Prostate gland (tissue), 2 donors: ENCODE measurements at regions of chr14 and their contacts with region 1.

Region 1: GRCh38 chr14:88667555-88668273 is 104.9 kb downstream of the ZC3H14 start:
- DNase-seq: peak; percentile 67
- H3K4me3 ChIP-seq: no peak overlapping the region
- H3K27ac ChIP-seq: peak overlapping the region; percentile 22
- H3K4me1 ChIP-seq: no peaks in the 10 kb centered on the region
- H3K27me3 ChIP-seq: no peaks in the 10 kb centered on the region
- CTCF ChIP-seq: peak in 3 of 4 experiments; percentile 69 to 79 (median 72)
- POLR2A ChIP-seq: no peak

Region 2: GRCh38 chr14:88492272-88493089 is 175.2 kb before region 1 on chr14:
- intact Hi-C with region 1: no loop called
- DNase-seq: peak; percentile 78
- H3K4me3 ChIP-seq: no peak overlapping the region
- H3K27ac ChIP-seq: no peak overlapping the region
- H3K4me1 ChIP-seq: no peaks in the 10 kb centered on the region
- H3K27me3 ChIP-seq: no peaks in the 10 kb centered on the region
- CTCF ChIP-seq: peak; percentile 72 to 94 (median 88)
- POLR2A ChIP-seq: no peak

Region 3: GRCh38 chr14:88792572-88793258 is 125.0 kb after region 1 on chr14 and contains the start of gene EML5:
- intact Hi-C with region 1: loop called (anchors 5 kb)
- DNase-seq: peak; percentile 87
- H3K4me3 ChIP-seq: peak within 1 kb of the TSS; percentile 68 to 69
- H3K27ac ChIP-seq: peak within 1 kb of the TSS; percentile 76 to 81
- H3K4me1 ChIP-seq: no peaks in the 10 kb centered on the region
- H3K27me3 ChIP-seq: no peaks in the 10 kb centered on the region
- CTCF ChIP-seq: peak in 3 of 4 experiments; percentile 16 to 43 (median 25)
- POLR2A ChIP-seq: peak; percentile 53
- total RNA-seq, gene EML5: 8.3 to 17.2 TPM